ENCODE measurements at regions of chr14 and their contacts with region 1.

Region 1: DNA sequence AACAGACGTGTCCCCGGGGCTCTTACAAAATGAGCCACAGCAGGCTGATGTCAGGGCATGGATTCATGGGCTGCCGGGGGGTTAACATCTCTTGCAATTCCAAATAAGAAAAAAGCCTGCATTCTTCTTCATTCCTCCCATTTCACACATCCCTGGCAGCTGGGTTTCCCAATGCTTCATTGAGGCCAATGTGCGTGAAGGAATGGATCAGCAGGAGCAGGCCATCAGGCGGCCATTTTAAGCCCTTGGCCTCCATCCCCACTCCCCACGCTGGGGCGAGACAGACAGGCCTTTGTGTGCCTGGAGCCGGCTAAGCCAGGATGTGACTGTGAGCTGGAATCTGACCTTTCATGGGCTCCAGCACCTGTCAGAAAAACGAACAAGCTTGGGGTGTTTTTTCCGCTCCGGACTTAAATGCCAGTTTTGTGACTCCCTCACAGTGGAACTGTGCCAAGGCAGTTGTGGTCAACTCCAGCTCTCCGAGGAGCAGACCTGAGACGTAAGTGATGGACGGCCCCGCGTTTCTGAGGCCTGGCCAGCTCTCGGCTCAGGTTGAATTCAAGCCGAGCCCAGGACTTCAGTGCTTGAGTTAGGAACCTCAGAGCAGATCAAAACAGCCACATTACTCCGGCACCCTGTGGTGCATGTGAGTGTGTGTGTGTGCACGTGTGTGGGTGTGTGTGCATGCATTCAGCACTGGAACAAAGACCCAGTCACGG is 133.1 kb downstream of the TMEM30B start:
- DNase-seq: peak; percentile 86
- H3K4me3 Mint-ChIP-seq: no peak overlapping the region
- H3K27ac Mint-ChIP-seq: peak overlapping the region; percentile 88
- H3K4me1 Mint-ChIP-seq: peaks cover 52% of the 10 kb centered on the region
- H3K27me3 Mint-ChIP-seq: no peaks in the 10 kb centered on the region
- CTCF ChIP-seq: no peak

Region 2: DNA sequence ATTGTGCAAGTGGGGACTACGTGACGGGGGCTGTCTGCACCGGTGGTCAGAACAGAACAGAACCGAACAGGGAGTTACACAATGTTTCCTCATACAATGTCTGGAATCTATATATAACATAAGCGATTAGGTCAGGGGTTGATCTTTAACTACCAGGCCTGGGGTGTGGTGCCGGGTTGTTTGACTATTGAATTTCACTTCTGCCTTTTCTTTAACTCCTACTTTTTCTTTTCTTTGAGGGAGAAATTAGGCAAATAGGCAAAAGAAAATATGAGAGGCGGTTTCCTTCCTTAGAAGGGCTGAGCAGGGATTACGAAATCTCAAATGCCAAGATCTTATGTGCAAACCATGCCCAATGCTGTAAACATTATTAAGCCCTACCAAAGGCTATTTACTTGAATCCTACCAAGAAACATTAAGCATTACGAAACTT is 26.6 kb before region 1 on chr14:
- CTCF ChIA-PET with region 1: no interaction called
- intact Hi-C with region 1: loop called (anchors 2 kb)
- DNase-seq: peak; percentile 65
- H3K4me3 Mint-ChIP-seq: peak overlapping the region; percentile 87
- H3K27ac Mint-ChIP-seq: peak overlapping the region; percentile 95
- H3K4me1 Mint-ChIP-seq: peaks cover 19% of the 10 kb centered on the region
- H3K27me3 Mint-ChIP-seq: no peaks in the 10 kb centered on the region
- CTCF ChIP-seq: no peak

Region 3: GRCh38 chr14:61326847-61327246 is 178.9 kb after region 1 on chr14:
- CTCF ChIA-PET with region 1: no interaction called
- intact Hi-C with region 1: no loop called
- DNase-seq: peak; percentile 66
- H3K4me3 Mint-ChIP-seq: peak overlapping the region; percentile 52
- H3K27ac Mint-ChIP-seq: peak overlapping the region; percentile 83
- H3K4me1 Mint-ChIP-seq: peaks cover 23% of the 10 kb centered on the region
- H3K27me3 Mint-ChIP-seq: no peaks in the 10 kb centered on the region
- CTCF ChIP-seq: no peak

Measured in Calu3 (cell line).